ENCODE measurements at regions of chr1 and their contacts with region 1.

Region 1: DNA sequence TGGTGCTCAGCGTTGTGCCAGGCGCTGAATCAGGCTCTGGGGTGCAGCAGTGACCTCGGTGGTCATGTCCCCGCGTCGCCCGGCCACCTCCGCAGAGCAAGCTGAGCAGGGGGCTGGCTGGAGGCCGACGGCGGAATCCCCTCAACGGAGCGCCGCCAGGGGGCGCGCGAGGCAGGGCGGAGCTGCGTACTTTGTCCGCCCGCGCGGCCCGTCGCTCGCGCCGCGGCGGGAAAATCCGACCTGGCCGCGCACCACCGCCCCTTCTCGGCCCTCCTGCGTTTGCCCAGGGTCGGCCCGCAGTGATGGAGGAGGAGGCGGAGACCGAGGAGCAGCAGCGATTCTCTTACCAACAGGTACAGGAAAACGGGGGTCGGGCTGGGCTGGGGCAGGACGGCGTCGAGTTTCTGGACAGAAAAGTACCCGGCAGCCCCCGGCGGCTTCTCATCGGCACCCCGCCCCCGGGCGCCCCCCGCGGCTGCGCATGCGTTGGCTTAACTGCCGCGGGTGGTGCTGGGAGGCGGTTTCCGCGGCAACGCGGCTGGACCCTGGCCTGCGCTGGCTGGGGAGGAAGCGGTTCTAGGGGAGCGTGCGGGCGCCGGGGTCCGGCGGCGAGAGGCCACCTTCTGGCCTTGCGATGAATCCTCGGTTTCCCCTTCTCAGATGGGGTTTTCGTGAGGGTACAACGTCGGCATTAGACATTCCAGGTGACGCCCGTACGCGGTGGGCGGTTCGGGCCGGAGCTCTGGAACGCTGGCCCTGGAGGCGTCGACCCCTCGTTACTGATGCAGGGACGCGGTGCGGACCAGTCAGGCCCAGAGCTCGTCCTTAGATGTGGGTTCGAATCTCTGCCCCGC is at the start of gene CENPS:
- DNase-seq: peak; percentile 85
- H3K4me3 Mint-ChIP-seq: peak within 1 kb of the TSS; percentile 86
- H3K27ac Mint-ChIP-seq: peak within 1 kb of the TSS; percentile 79
- H3K4me1 Mint-ChIP-seq: peaks cover 39% of the 10 kb centered on the region
- H3K27me3 Mint-ChIP-seq: no peaks in the 10 kb centered on the region
- total RNA-seq, gene CENPS: 13.5 to 15.2 TPM

Region 2: DNA sequence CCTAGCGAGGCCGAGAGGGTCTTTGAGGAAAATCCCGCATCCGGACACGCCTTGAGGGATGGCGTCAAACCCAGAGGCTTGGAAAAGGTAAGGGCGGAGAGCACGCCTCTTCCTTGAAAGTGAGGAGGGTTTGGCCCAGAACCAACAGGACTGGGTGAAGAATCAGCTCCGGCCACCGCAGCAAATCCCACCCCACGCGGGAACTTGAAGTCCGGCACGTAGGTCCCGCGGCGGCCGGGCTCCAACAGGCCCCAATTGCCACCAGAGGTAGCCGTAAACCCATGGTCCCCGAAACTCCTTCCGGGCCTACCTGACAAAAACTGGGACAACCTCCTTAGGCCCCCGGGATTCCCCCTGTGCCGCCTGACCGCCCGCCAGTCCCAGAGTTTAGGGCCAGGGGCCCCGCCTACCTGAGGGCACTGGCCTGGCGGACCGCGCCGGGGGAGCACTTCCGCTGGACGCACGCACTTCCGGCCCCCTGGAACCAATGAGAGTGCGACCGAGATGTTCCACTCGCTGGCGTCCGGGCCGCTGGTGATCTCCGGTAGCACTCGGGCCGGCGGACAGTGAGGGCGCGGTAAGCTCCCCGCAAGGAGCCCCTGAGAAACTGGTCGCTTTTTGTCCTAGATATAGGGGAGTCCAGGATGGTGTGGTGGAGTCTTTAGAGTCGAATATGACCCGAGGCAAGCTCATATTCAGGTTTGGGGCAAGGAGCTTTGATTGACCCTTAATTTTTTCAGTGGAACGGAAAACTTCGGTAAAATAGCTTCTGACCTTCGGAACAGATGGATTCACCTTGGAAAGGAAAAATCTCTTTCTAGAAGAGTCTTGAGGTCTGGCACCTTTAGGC is 487.3 kb before region 1 on chr1 and contains the starts of genes LZIC and NMNAT1:
- CTCF ChIA-PET with region 1: interaction called, 4 read pairs
- POLR2A ChIA-PET with region 1: interaction called, 11 read pairs
- DNase-seq: peak; percentile 92
- H3K4me3 Mint-ChIP-seq: peak within 1 kb of the TSS; percentile 98
- H3K27ac Mint-ChIP-seq: peak within 1 kb of the TSS; percentile 93
- H3K4me1 Mint-ChIP-seq: peaks cover 25% of the 10 kb centered on the region
- H3K27me3 Mint-ChIP-seq: no peaks in the 10 kb centered on the region
- total RNA-seq, gene LZIC: 25.2 to 26.5 TPM
- total RNA-seq, gene NMNAT1: 5.6 to 6.2 TPM

Region 3: GRCh38 chr1:10225573-10225972 is 204.9 kb before region 1 on chr1:
- CTCF ChIA-PET with region 1: no interaction called
- POLR2A ChIA-PET with region 1: no interaction called
- DNase-seq: no peak
- H3K4me3 Mint-ChIP-seq: no peak overlapping the region
- H3K27ac Mint-ChIP-seq: no peak overlapping the region
- H3K4me1 Mint-ChIP-seq: peaks cover 8% of the 10 kb centered on the region
- H3K27me3 Mint-ChIP-seq: no peaks in the 10 kb centered on the region

Region 4: DNA sequence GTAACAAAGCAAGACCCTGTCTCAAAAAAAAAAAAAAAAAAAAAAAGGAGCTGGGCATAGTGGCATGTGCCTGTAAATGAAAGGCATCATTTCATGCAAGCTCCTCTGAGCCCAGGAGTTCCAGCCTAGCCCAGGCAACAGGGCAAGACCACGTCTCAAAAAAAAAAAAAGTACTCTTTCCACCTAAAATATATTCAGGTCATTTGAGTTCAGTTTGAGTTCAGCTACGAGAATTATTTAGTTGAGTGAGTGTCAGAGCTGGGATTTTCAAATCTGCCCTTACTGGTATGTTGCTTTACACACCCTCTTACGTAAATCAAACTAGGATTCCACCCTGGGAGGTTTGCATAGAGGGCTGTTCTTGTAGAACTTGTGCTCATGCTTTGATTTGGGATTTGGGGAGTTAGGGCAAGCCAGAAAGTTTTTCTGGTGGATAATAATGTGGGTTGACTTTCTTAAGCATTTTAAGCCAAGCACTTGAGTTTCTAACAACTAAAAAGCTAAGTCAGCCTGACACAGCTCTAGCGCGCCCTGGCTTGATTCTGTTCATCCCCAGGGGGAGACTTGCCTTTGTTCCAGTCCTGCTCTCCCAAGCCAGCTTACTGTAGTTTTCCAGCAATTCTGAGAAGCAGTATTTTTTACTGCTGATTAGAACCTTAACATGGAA is 42.9 kb before region 1 on chr1:
- CTCF ChIA-PET with region 1: interaction called, 10 read pairs
- POLR2A ChIA-PET with region 1: interaction called, 3 read pairs
- DNase-seq: no peak
- H3K4me3 Mint-ChIP-seq: no peak overlapping the region
- H3K27ac Mint-ChIP-seq: no peak overlapping the region
- H3K4me1 Mint-ChIP-seq: no peaks in the 10 kb centered on the region
- H3K27me3 Mint-ChIP-seq: no peaks in the 10 kb centered on the region

Region 5: GRCh38 chr1:10398734-10399623 is 31.5 kb before region 1 on chr1 and contains the start of gene PGD:
- CTCF ChIA-PET with region 1: interaction called, 9 read pairs
- POLR2A ChIA-PET with region 1: interaction called, 11 read pairs
- DNase-seq: peak; percentile 98
- H3K4me3 Mint-ChIP-seq: peak within 1 kb of the TSS; percentile 89
- H3K27ac Mint-ChIP-seq: peak within 1 kb of the TSS; percentile 67
- H3K4me1 Mint-ChIP-seq: peaks cover 44% of the 10 kb centered on the region
- H3K27me3 Mint-ChIP-seq: no peaks in the 10 kb centered on the region
- total RNA-seq, gene PGD: 80.8 to 84.3 TPM

Region 6: DNA sequence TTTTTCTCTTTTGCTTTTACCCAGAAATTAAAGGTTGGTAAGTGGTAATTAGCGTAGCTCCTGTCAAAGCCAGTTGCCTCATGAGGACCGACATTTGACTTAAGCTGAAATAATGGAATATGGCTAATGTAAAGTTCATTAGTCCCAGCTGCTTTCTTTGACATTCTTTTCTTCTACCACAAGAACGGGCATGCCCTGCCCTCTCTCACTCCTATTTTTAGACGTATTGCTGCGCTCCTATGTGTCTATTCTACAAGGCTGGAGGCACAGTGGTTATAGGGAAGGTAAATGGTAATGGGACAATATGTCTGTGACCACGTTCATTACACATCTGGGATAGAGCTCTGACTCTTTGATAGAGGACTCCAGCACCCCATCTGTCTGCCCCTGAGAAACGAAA is 26.2 kb after region 1 on chr1:
- CTCF ChIA-PET with region 1: interaction called, 10 read pairs
- POLR2A ChIA-PET with region 1: interaction called, 5 read pairs
- DNase-seq: no peak
- H3K4me3 Mint-ChIP-seq: no peak overlapping the region
- H3K27ac Mint-ChIP-seq: no peak overlapping the region
- H3K4me1 Mint-ChIP-seq: peaks cover 12% of the 10 kb centered on the region
- H3K27me3 Mint-ChIP-seq: no peaks in the 10 kb centered on the region

Region 7: DNA sequence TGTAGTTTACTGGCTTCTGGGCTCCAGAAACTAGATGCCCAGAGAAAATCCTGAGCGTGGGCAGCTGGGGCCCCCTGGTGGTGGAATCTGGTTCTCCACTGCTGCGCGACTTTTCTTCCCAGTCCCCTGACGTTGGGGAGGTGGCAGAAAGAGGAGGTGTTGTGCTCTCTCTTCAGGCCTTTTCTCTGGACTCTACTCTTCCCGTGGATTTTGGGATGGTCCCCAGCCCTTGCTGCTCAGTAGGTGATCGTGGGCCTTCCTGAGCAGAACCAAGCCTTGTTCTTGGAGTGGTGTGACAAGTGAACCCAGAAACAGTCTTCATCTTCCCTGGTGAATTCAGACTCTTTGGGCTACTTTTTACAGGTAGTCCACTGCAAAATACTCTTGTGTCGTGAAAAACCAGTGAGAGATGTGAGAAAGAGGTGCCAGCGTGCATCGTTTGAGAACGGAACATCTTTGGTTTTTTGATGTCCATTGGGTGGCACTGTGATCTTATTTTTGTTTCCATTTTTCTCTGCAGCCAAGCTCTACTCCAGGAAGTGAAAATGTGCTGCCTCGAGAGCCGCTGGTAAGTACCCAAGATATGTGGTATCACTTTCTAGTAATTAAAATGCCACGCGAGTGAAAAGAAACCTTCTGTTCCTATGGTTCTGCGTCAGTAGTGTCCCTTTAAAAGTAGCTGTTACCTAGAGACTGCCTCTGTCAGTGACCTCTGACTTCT is 64.5 kb after region 1 on chr1:
- CTCF ChIA-PET with region 1: interaction called, 106 read pairs
- POLR2A ChIA-PET with region 1: interaction called, 30 read pairs
- DNase-seq: peak; percentile 85
- H3K4me3 Mint-ChIP-seq: peak overlapping the region; percentile 75
- H3K27ac Mint-ChIP-seq: peak overlapping the region; percentile 87
- H3K4me1 Mint-ChIP-seq: peaks cover 52% of the 10 kb centered on the region
- H3K27me3 Mint-ChIP-seq: no peaks in the 10 kb centered on the region

Measured in activated CD4-positive, alpha-beta memory T cell treated with anti-CD3 and anti-CD28 coated beads, Interleukin-2, amount 10 ng/mL, durations not matched to agents 7 days and 5 days (primary cell).